Endothelial cell of umbilical vein (primary cell): ENCODE measurements at regions of chr14 and their contacts with region 1.

Region 1: GRCh38 chr14:67285876-67286452 is 44.7 kb downstream of the PALS1 start:
- DNase-seq: peak; percentile 39
- H3K4me3 ChIP-seq: no peak overlapping the region
- H3K27ac ChIP-seq: no peak overlapping the region
- H3K4me1 ChIP-seq: no peaks in the 10 kb centered on the region
- H3K27me3 ChIP-seq: no peaks in the 10 kb centered on the region
- CTCF ChIP-seq: peak; percentile 4 to 7
- POLR2A ChIP-seq: no peak

Region 2: DNA sequence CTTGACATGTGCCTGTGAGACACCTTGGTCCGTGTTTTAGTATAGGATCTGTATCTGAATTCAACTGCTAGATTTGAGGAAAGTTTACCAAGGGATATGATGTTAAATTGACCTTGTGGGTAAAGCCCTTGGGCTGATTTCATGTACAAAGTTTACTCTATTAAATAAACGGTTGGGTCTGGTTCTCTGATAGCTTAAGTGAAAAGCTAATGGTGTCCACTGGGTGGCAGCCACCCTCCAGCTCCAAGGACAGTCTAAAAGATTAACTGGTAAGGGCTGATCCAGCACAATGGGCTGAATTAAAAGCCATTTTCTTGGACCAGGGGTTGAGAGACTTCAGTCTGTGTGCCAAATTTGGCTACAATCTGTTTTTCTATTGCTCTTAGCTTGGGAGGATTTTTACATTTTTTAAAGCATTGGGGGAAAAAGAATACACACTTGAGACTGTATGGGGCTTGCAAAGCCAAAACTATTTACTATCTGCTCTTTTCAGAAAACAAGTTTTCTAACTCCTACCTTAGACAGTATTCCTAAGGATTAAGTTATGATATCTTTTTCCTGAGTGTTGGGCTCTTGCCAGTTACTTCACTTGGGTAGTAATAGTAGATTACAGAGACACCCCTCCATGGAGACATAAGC is 661.5 kb before region 1 on chr14:
- CTCF ChIA-PET with region 1: interaction called, 32 read pairs
- POLR2A ChIA-PET with region 1: no interaction called
- dilution Hi-C with region 1: no loop called
- intact Hi-C with region 1: loop called (anchors 2 kb)
- DNase-seq: peak; percentile 71
- H3K4me3 ChIP-seq: no peak overlapping the region
- H3K27ac ChIP-seq: no peak overlapping the region
- H3K4me1 ChIP-seq: no peaks in the 10 kb centered on the region
- H3K27me3 ChIP-seq: no peaks in the 10 kb centered on the region
- CTCF ChIP-seq: peak; percentile 60 to 63
- POLR2A ChIP-seq: no peak

Region 3: GRCh38 chr14:67166450-67166853 is 119.5 kb before region 1 on chr14:
- CTCF ChIA-PET with region 1: interaction called, 186 read pairs
- POLR2A ChIA-PET with region 1: no interaction called
- dilution Hi-C with region 1: no loop called
- intact Hi-C with region 1: loop called (anchors 1 kb)
- DNase-seq: peak; percentile 60
- H3K4me3 ChIP-seq: no peak overlapping the region
- H3K27ac ChIP-seq: no peak overlapping the region
- H3K4me1 ChIP-seq: no peaks in the 10 kb centered on the region
- H3K27me3 ChIP-seq: no peaks in the 10 kb centered on the region
- CTCF ChIP-seq: peak; percentile 53 to 60
- POLR2A ChIP-seq: no peak

Region 4: DNA sequence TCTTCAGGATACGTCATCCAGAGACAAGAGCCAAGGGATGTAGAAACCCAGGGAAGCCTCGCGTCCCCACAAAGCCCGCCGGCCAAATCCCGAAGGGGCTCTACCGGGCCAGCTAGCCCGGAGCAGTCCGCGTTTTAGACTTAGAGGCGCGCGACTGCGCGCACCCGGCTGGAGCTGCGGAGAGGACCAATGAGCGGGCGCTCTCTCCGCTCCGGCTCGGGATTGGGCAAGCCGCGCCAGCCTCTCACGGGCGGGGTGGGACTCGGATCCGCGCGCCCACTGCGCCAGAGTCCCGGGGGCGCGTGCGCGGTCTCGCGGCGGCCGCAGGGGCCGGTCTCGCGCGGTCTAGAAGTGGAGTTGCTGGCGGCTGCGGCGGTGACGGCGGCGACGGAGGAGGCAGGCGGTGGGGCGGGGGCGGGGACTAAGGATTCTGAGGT is 45.0 kb before region 1 on chr14:
- CTCF ChIA-PET with region 1: interaction called, 28 read pairs
- POLR2A ChIA-PET with region 1: no interaction called
- dilution Hi-C with region 1: no loop called
- intact Hi-C with region 1: loop called (anchors 2 kb)
- DNase-seq: peak; percentile 99
- H3K4me3 ChIP-seq: peak overlapping the region; percentile 79 to 99 (median 90)
- H3K27ac ChIP-seq: peak overlapping the region; percentile 82
- H3K4me1 ChIP-seq: peaks cover 13% of the 10 kb centered on the region
- H3K27me3 ChIP-seq: peaks cover 0 to 4% of the 10 kb centered on the region in 2 experiments
- CTCF ChIP-seq: no peak
- POLR2A ChIP-seq: peak; percentile 63

Region 5: GRCh38 chr14:67269298-67270061 is 16.5 kb before region 1 on chr14:
- CTCF ChIA-PET with region 1: interaction called, 41 read pairs
- POLR2A ChIA-PET with region 1: no interaction called
- dilution Hi-C with region 1: no loop called
- intact Hi-C with region 1: no loop called
- DNase-seq: peak; percentile 30
- H3K4me3 ChIP-seq: no peak overlapping the region
- H3K27ac ChIP-seq: no peak overlapping the region
- H3K4me1 ChIP-seq: peaks cover 10% of the 10 kb centered on the region
- H3K27me3 ChIP-seq: no peaks in the 10 kb centered on the region
- CTCF ChIP-seq: no peak
- POLR2A ChIP-seq: no peak

Region 6: DNA sequence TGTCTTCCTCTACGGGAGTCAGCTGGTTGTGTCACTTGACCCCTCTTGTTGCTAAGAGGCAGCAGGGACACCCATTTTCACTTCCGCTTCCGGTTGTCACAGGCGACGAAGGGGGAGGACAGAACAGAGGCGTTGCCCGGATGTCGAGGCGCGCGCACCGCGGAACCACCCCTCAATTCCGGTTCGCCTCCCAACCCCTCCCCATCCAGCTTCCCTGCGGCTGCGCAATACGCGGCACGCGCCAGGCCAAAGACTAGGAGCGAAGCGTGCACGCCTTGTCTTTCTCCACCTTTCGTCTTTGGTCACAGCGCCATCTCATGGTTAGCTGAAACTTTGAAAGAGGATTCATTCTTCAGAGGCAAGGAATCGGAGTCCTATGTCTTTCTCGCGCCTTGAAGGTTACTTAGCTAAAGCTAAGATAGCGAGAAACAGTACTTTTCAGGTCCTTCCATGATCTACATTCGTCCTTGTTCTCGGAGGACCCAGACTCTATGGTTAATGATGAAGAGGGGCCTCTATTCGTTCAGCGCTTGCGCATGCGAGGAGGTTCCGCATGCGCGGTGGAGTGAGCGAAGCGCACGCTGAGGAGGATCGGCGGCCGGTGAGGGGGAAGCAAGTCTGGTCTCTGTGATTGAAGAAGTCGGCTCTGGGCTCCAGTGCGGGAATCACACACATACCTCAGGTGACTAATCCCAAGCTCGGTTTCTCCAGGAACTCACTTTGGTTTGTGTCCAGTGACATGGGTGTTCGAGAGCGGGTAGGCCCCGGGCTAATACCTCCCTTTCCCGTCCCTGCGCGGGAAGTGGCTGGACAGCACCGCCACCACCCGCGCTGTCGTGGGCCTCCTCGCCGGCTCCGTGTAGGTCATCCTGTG is 74.0 kb after region 1 on chr14 and contains the starts of genes ATP6V1D and EIF2S1:
- CTCF ChIA-PET with region 1: interaction called, 11 read pairs
- POLR2A ChIA-PET with region 1: no interaction called
- dilution Hi-C with region 1: no loop called
- intact Hi-C with region 1: no loop called
- DNase-seq: peak; percentile 99
- H3K4me3 ChIP-seq: peak within 1 kb of the TSS; percentile 75 to 83 (median 83)
- H3K27ac ChIP-seq: peak within 1 kb of the TSS; percentile 96
- H3K4me1 ChIP-seq: peaks cover 35% of the 10 kb centered on the region
- H3K27me3 ChIP-seq: no peaks in the 10 kb centered on the region
- CTCF ChIP-seq: peak; percentile 81 to 98
- POLR2A ChIP-seq: peak; percentile 75
- total RNA-seq, gene ATP6V1D: 60.7 and 63.1 TPM in 2 replicates
- total RNA-seq, gene EIF2S1: 130 and 135 TPM in 2 replicates

Region 7: GRCh38 chr14:67710209-67710608 is 424.2 kb after region 1 on chr14:
- CTCF ChIA-PET with region 1: no interaction called
- POLR2A ChIA-PET with region 1: no interaction called
- dilution Hi-C with region 1: no loop called
- intact Hi-C with region 1: no loop called
- DNase-seq: no peak
- H3K4me3 ChIP-seq: no peak overlapping the region
- H3K27ac ChIP-seq: no peak overlapping the region
- H3K4me1 ChIP-seq: no peaks in the 10 kb centered on the region
- H3K27me3 ChIP-seq: peaks cover 0 to under 1% of the 10 kb centered on the region in 2 experiments
- CTCF ChIP-seq: no peak
- POLR2A ChIP-seq: no peak